Activated CD4-positive, alpha-beta memory T cell treated with anti-CD3 and anti-CD28 coated beads for 36 hours (primary cell): ENCODE measurements at regions of chr1 and their contacts with region 1.

Region 1: DNA sequence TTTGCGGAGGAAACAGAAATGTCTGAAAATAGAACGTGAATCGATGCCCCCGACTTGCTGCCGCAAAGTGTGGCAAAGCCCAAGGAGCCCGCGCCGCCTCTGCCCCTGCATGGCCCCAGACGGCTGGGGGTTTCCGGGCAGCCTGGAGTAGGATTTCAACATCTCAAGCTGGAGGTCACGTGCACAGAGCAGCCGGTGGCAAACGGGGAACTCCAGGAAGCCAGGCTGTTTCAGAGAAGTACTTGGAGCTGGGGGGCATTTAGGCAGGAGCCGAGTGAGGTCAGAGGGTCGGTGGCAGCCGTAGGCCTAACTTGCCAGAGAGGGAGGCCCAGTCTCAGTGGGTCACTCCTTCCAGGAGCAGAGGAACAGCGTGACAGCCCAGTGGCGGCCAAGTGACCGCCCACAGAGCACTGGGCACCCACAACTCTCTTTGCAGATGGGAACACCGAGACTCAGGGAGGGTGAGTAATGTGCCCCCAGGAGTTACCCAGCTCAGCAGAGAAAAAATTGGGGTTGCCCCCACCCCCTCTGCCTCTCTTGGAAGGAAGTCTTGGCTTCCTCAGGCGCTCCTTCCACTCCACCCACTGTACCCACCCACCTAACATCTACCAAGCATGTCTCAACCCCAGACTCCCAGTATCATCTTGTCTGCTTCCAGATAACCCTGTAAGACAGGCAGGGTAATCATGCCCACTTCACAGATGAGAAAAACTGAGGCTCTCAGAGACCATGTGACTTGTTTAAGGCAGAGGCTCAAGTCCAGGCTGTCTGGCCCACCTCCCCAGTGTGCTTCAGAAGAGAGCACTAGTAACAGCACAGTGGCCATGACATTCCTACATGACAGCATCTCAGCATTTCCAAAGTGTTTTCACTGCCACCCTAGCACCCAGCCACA is 179.4 kb downstream of the HIVEP3 start:
- DNase-seq: peak; percentile 95
- H3K4me3 Mint-ChIP-seq: peak overlapping the region; percentile 66
- H3K27ac Mint-ChIP-seq: peak overlapping the region; percentile 92
- H3K4me1 Mint-ChIP-seq: peaks cover 84% of the 10 kb centered on the region
- H3K27me3 Mint-ChIP-seq: no peaks in the 10 kb centered on the region

Region 2: GRCh38 chr1:41662061-41662764 is 77.1 kb before region 1 on chr1:
- CTCF ChIA-PET with region 1: interaction called, 3 read pairs
- POLR2A ChIA-PET with region 1: interaction called, 8 read pairs
- intact Hi-C with region 1: loop called (anchors 1 kb)
- DNase-seq: peak; percentile 88
- H3K4me3 Mint-ChIP-seq: peak overlapping the region; percentile 71
- H3K27ac Mint-ChIP-seq: peak overlapping the region; percentile 80
- H3K4me1 Mint-ChIP-seq: peaks cover 78% of the 10 kb centered on the region
- H3K27me3 Mint-ChIP-seq: no peaks in the 10 kb centered on the region

Region 3: GRCh38 chr1:41720861-41721410 is 18.4 kb before region 1 on chr1:
- CTCF ChIA-PET with region 1: interaction called, 3 read pairs
- POLR2A ChIA-PET with region 1: interaction called, 3 read pairs
- intact Hi-C with region 1: loop called (anchors 2 kb)
- DNase-seq: peak; percentile 44
- H3K4me3 Mint-ChIP-seq: peak overlapping the region; percentile 2
- H3K27ac Mint-ChIP-seq: peak overlapping the region; percentile 19
- H3K4me1 Mint-ChIP-seq: peaks cover 36% of the 10 kb centered on the region
- H3K27me3 Mint-ChIP-seq: no peaks in the 10 kb centered on the region

Region 4: DNA sequence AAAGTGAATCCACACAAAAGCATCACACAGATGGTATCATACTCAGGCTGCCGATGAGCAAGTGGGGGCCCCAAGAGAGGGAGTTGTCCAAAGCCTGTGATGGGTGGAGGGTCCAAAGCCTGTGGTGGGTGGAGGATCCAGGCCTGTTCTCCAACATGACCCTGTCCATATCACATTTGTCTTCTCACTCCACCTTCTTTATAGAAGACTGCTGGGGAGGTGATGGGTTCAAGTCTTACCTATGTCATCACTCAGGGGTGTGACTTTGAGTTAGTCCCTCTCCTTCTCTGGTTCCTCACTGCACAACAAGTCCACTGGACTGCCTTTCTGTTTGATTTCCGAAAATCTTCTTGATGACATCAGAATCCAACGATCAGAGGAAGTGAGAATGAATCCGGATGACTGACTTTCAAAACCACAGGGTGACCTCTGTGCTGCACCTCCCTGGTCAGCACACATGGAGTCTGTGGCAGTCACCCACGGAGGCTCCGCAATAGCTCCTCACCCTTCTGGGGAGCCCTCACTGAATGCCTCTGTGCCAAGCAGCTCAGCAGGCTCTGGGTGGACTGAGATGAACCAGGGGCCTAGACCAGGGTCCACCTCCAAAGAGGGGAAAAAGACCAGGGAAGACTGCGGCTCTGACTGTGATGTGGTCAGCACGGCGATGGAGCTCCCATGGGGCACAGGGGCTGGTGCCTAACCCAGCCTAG is 12.7 kb after region 1 on chr1:
- CTCF ChIA-PET with region 1: interaction called, 3 read pairs
- POLR2A ChIA-PET with region 1: interaction called, 16 read pairs
- intact Hi-C with region 1: loop called (anchors 1 kb)
- DNase-seq: peak; percentile 39
- H3K4me3 Mint-ChIP-seq: peak overlapping the region; percentile 40
- H3K27ac Mint-ChIP-seq: peak overlapping the region; percentile 84
- H3K4me1 Mint-ChIP-seq: peaks cover 71% of the 10 kb centered on the region
- H3K27me3 Mint-ChIP-seq: no peaks in the 10 kb centered on the region

Region 5: DNA sequence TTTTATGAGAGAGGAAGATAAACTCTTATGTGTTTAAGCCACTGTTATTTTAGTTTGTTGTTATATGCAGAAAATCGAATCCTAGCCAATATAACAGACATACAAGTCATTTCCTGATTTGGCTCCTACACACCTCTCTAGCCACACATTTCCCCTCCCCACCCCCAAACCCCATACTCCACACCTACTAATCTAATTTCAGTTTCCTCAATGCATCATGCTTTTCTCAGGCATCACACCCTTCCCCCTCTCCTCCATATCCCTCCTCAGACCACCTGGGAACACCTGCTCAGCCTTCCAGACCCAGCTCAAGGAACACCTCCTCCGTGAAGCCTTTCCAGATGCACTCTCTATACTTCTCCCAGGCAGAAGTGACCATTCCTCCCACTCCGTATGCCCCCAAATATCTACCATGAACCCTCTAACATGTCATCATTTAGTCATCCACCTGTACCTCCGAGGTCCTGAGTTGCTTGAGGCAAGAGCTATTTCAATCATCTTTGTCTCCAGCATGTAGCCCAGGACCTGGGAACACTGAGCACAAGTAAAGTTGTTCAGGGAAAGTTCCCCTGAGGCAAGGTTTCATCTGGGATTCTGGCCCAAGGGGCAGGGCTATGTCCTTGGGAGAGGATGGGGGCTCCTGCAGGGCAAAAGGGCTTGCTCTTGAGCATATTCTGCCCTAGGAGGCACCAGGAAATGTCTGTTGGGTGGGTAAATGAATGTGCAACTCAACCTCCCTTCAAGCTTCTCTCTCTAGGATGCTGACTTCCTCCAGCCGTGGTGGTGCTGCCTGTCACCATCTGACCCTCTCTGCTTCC is 52.6 kb after region 1 on chr1:
- CTCF ChIA-PET with region 1: no interaction called
- POLR2A ChIA-PET with region 1: interaction called, 4 read pairs
- intact Hi-C with region 1: loop called (anchors 2 kb)
- DNase-seq: peak; percentile 73
- H3K4me3 Mint-ChIP-seq: no peak overlapping the region
- H3K27ac Mint-ChIP-seq: peak overlapping the region; percentile 78
- H3K4me1 Mint-ChIP-seq: peaks cover 51% of the 10 kb centered on the region
- H3K27me3 Mint-ChIP-seq: no peaks in the 10 kb centered on the region

Region 6: GRCh38 chr1:41862384-41863174 is 123.3 kb after region 1 on chr1:
- CTCF ChIA-PET with region 1: no interaction called
- POLR2A ChIA-PET with region 1: no interaction called
- intact Hi-C with region 1: loop called (anchors 2 kb)
- DNase-seq: peak; percentile 83
- H3K4me3 Mint-ChIP-seq: peak overlapping the region; percentile 18
- H3K27ac Mint-ChIP-seq: peak overlapping the region; percentile 83
- H3K4me1 Mint-ChIP-seq: peaks cover 36% of the 10 kb centered on the region
- H3K27me3 Mint-ChIP-seq: no peaks in the 10 kb centered on the region